Calu3 (cell line): ENCODE measurements at regions of chr4 and their contacts with region 1.

Region 1: GRCh38 chr4:114563536-114564315 is 34.9 kb upstream of the UGT8 start:
- DNase-seq: peak; percentile 18
- H3K4me3 Mint-ChIP-seq: peak overlapping the region; percentile 24
- H3K27ac Mint-ChIP-seq: no peak overlapping the region
- H3K4me1 Mint-ChIP-seq: peaks cover 24% of the 10 kb centered on the region
- H3K27me3 Mint-ChIP-seq: no peaks in the 10 kb centered on the region
- CTCF ChIP-seq: no peak

Region 2: GRCh38 chr4:114509340-114509739 is 54.4 kb before region 1 on chr4:
- CTCF ChIA-PET with region 1: no interaction called
- intact Hi-C with region 1: loop called (anchors 2 kb)
- DNase-seq: no peak
- H3K4me3 Mint-ChIP-seq: no peak overlapping the region
- H3K27ac Mint-ChIP-seq: no peak overlapping the region
- H3K4me1 Mint-ChIP-seq: peaks cover 9% of the 10 kb centered on the region
- H3K27me3 Mint-ChIP-seq: peaks cover 63% of the 10 kb centered on the region
- CTCF ChIP-seq: no peak

Region 3: GRCh38 chr4:114598191-114599121 is 34.7 kb after region 1 on chr4 and contains the start of gene UGT8:
- CTCF ChIA-PET with region 1: no interaction called
- intact Hi-C with region 1: loop called (anchors 5 kb)
- DNase-seq: peak; percentile 68
- H3K4me3 Mint-ChIP-seq: peak within 1 kb of the TSS; percentile 98
- H3K27ac Mint-ChIP-seq: peak within 1 kb of the TSS; percentile 94
- H3K4me1 Mint-ChIP-seq: no peaks in the 10 kb centered on the region
- H3K27me3 Mint-ChIP-seq: no peaks in the 10 kb centered on the region
- CTCF ChIP-seq: no peak
- total RNA-seq, gene UGT8: 20.2 and 23.1 TPM in 2 replicates

Region 4: GRCh38 chr4:114642173-114642780 is 78.6 kb after region 1 on chr4:
- CTCF ChIA-PET with region 1: no interaction called
- intact Hi-C with region 1: no loop called
- DNase-seq: no peak
- H3K4me3 Mint-ChIP-seq: no peak overlapping the region
- H3K27ac Mint-ChIP-seq: no peak overlapping the region
- H3K4me1 Mint-ChIP-seq: no peaks in the 10 kb centered on the region
- H3K27me3 Mint-ChIP-seq: no peaks in the 10 kb centered on the region
- CTCF ChIP-seq: no peak